ENCODE measurements at regions of chr2 and their contacts with region 1.

Region 1: GRCh38 chr2:156017341-156017885 is 315.1 kb downstream of the NR4A2 start:
- DNase-seq: no peak
- ATAC-seq: no peak

Region 2: GRCh38 chr2:155703917-155704316 is 313.5 kb before region 1 on chr2:
- intact Hi-C with region 1: no loop called
- DNase-seq: no peak
- ATAC-seq: no peak

Region 3: DNA sequence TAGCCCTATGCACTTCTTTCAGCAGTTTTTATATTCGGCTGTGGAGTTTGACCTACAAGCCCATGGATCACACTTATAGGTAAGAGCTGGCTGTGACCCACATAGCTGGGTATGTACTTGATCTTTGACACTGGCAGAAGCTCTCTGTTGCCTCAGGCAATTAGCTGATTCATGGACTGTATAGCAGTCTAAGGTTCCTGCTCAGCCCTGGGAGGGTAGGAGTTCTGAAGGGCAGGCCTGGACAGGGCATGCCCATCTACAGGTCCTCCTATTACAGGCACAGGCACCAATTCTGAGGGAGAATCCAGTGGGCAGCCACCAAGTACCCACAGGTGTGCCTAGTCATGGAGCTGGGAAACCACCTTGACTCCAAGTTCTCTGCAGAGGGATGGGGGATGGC is 938.3 kb after region 1 on chr2:
- intact Hi-C with region 1: loop called (anchors 5 kb)
- DNase-seq: no peak
- ATAC-seq: no peak

Measured in left ventricle myocardium superior (tissue), 1 donor.